Activated CD8-positive, alpha-beta T cell treated with anti-CD3 and anti-CD28 coated beads for 36 hours (primary cell): ENCODE measurements at regions of chr5 and their contacts with region 1.

Region 1: DNA sequence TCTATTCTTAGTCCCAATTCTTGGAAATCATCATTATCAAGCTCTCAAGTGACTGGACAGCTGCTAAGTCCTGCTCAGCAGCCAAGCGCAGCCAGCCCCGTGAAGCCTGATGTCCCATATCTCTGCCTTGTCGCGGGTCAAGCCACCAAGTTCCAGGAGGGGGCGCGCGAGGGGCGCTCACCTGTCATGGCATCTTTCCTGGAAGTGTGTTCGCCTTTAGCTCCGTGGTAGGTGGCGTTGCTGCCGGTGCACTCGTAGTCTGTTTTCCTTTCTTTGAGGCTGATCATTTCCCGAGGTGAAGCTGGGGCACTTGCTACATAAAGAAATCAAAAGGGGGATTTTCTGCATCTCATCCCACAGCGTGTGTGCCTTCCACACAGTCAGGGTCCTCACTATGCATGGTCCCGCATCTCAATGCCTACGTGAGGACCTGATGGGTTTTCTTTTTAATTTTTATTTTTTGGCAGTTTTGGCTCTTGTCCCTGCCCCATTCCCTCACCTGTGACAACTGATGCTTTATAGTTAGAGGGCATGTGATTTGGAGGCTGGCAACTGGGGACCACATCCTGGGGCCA is 227.0 kb upstream of the DAP start:
- DNase-seq: peak; percentile 84
- ATAC-seq: peak; percentile 94
- H3K4me3 Mint-ChIP-seq: no peak overlapping the region
- H3K27ac Mint-ChIP-seq: no peak overlapping the region
- H3K4me1 Mint-ChIP-seq: peaks cover 8% of the 10 kb centered on the region
- H3K27me3 Mint-ChIP-seq: peaks cover 16% of the 10 kb centered on the region
- CTCF ChIP-seq: peak; percentile 76

Region 2: DNA sequence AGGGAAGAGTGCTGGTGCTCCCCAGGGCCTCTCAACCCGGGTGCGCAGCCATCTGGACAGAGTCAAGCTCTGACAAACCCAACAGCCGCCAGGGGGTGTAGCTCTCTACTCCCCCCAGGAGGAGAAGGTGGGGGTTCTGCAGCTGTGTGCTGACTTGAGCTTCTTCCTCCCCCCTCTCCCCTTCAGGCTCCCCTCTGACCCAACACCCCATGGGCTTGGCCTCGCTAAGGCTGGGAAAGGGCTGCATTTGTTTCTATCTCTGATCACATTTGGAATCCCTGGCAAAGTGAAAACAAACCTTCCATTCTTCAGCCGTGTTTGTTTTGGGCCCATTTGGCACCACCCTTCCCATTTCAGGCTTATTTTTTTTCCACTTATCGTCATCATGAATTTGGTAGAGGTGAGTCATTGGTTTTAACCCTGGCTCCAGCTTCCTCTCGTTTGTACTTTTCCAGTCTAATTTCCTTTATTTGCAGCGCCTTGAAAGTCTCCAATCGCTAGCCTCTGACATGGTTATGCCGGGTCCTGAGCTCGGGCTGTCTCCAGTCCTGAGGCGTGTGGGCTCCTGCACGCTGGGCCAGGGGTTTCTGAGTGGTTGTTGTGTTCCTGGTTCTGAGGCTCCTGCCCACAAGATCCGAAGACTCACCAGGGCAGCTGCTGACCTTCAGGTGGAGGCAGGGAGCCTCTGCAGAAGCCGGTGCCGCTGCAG is 263.1 kb before region 1 on chr5:
- CTCF ChIA-PET with region 1: no interaction called
- POLR2A ChIA-PET with region 1: no interaction called
- intact Hi-C with region 1: no loop called
- DNase-seq: no peak
- ATAC-seq: no peak
- H3K4me3 Mint-ChIP-seq: no peak overlapping the region
- H3K27ac Mint-ChIP-seq: no peak overlapping the region
- H3K4me1 Mint-ChIP-seq: peaks cover 23% of the 10 kb centered on the region
- H3K27me3 Mint-ChIP-seq: no peaks in the 10 kb centered on the region
- CTCF ChIP-seq: no peak

Region 3: GRCh38 chr5:10975945-10976344 is 12.1 kb before region 1 on chr5:
- CTCF ChIA-PET with region 1: interaction called, 24 read pairs
- POLR2A ChIA-PET with region 1: no interaction called
- intact Hi-C with region 1: no loop called
- DNase-seq: no peak
- ATAC-seq: no peak
- H3K4me3 Mint-ChIP-seq: no peak overlapping the region
- H3K27ac Mint-ChIP-seq: no peak overlapping the region
- H3K4me1 Mint-ChIP-seq: no peaks in the 10 kb centered on the region
- H3K27me3 Mint-ChIP-seq: no peaks in the 10 kb centered on the region
- CTCF ChIP-seq: no peak

Region 4: GRCh38 chr5:11000515-11001353 is 12.7 kb after region 1 on chr5:
- CTCF ChIA-PET with region 1: interaction called, 22 read pairs
- POLR2A ChIA-PET with region 1: no interaction called
- intact Hi-C with region 1: no loop called
- DNase-seq: no peak
- ATAC-seq: no peak
- H3K4me3 Mint-ChIP-seq: no peak overlapping the region
- H3K27ac Mint-ChIP-seq: no peak overlapping the region
- H3K4me1 Mint-ChIP-seq: no peaks in the 10 kb centered on the region
- H3K27me3 Mint-ChIP-seq: peaks cover 2% of the 10 kb centered on the region
- CTCF ChIP-seq: no peak

Region 5: DNA sequence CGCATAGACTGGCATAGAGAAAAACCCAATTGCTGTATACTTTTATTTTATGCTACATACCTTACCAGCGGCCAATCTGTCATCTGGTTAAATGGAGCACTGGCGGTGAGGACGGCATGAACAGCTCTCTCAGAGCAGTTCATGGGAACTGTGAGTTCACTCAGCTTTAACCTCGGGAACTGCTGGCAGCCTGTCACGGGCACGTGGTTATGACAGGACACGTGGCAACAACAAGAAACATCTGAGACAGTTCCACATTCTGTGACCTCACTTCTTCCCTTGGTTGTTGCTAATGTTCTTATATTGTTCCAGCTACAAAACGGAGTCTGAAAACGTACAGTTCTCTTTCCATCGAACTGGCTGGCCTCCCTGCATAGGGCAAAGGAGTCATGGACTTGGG is 19.3 kb after region 1 on chr5:
- CTCF ChIA-PET with region 1: interaction called, 22 read pairs
- POLR2A ChIA-PET with region 1: no interaction called
- intact Hi-C with region 1: no loop called
- DNase-seq: no peak
- ATAC-seq: no peak
- H3K4me3 Mint-ChIP-seq: no peak overlapping the region
- H3K27ac Mint-ChIP-seq: no peak overlapping the region
- H3K4me1 Mint-ChIP-seq: no peaks in the 10 kb centered on the region
- H3K27me3 Mint-ChIP-seq: peaks cover 2% of the 10 kb centered on the region
- CTCF ChIP-seq: no peak

Region 6: GRCh38 chr5:11013793-11014192 is 25.8 kb after region 1 on chr5:
- CTCF ChIA-PET with region 1: interaction called, 10 read pairs
- POLR2A ChIA-PET with region 1: no interaction called
- intact Hi-C with region 1: no loop called
- DNase-seq: no peak
- ATAC-seq: no peak
- H3K4me3 Mint-ChIP-seq: no peak overlapping the region
- H3K27ac Mint-ChIP-seq: no peak overlapping the region
- H3K4me1 Mint-ChIP-seq: no peaks in the 10 kb centered on the region
- H3K27me3 Mint-ChIP-seq: no peaks in the 10 kb centered on the region
- CTCF ChIP-seq: no peak